Activated CD4-positive, alpha-beta memory T cell treated with anti-CD3 and anti-CD28 coated beads for 36 hours (primary cell): ENCODE measurements at regions of chr9 and their contacts with region 1.

Region 1: DNA sequence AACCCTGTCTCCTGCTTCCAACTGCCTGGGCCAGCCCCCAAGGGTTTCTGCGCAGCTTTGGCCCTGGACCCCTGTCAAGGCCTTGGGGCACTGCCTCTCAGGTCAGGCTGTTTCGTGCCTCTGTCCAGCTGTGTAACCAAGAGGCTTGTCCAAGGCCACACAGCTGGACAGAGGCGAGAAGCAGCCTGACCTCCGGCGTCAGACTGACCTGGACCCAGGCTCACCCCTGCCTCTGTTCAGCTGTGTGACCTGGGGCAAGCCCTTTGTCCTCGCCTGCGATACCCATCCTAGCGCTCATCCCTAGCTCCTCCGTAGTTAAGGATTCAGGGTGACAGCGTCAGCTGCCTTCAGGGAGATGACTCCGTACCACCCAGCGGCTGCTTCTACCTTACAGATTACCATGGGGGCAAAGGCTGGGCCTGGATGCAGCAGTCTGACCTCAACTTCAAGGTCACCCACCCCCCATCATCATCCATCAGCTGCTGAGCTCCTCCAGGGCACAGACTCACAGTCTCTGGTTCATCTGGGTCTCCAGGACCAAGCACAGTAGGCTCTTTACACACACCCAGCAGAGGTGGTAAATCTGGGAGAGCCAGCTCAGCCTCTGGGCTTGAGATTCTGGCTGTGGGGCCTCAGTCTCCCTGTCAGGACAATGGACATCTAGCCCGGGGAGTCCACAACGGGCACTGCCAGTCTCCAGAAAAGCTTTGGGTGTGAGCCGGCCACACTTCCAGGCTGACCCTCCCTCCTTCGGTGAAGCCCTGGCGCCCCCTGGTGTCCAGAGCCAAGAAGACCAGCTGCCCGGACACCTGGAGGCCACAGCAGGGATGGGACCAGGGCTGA is 7.9 kb downstream of the AK1 start:
- DNase-seq: peak; percentile 89
- H3K4me3 Mint-ChIP-seq: no peak overlapping the region
- H3K27ac Mint-ChIP-seq: no peak overlapping the region
- H3K4me1 Mint-ChIP-seq: peaks cover 13% of the 10 kb centered on the region
- H3K27me3 Mint-ChIP-seq: no peaks in the 10 kb centered on the region

Region 2: GRCh38 chr9:127586537-127586936 is 283.0 kb before region 1 on chr9:
- CTCF ChIA-PET with region 1: interaction called, 10 read pairs
- POLR2A ChIA-PET with region 1: no interaction called
- intact Hi-C with region 1: no loop called
- DNase-seq: peak; percentile 71
- H3K4me3 Mint-ChIP-seq: no peak overlapping the region
- H3K27ac Mint-ChIP-seq: no peak overlapping the region
- H3K4me1 Mint-ChIP-seq: peaks cover 9% of the 10 kb centered on the region
- H3K27me3 Mint-ChIP-seq: peaks cover 6% of the 10 kb centered on the region

Region 3: GRCh38 chr9:127770905-127771569 is 98.5 kb before region 1 on chr9:
- CTCF ChIA-PET with region 1: interaction called, 29 read pairs
- POLR2A ChIA-PET with region 1: no interaction called
- intact Hi-C with region 1: no loop called
- DNase-seq: peak; percentile 99
- H3K4me3 Mint-ChIP-seq: peak overlapping the region; percentile 89
- H3K27ac Mint-ChIP-seq: peak overlapping the region; percentile 85
- H3K4me1 Mint-ChIP-seq: peaks cover 56% of the 10 kb centered on the region
- H3K27me3 Mint-ChIP-seq: no peaks in the 10 kb centered on the region

Region 4: GRCh38 chr9:127802576-127803443 is 66.7 kb before region 1 on chr9 and contains the start of gene FPGS:
- CTCF ChIA-PET with region 1: interaction called, 27 read pairs
- POLR2A ChIA-PET with region 1: no interaction called
- intact Hi-C with region 1: no loop called
- DNase-seq: peak; percentile 91
- H3K4me3 Mint-ChIP-seq: peak within 1 kb of the TSS; percentile 88
- H3K27ac Mint-ChIP-seq: peak within 1 kb of the TSS; percentile 88
- H3K4me1 Mint-ChIP-seq: peaks cover 24% of the 10 kb centered on the region
- H3K27me3 Mint-ChIP-seq: no peaks in the 10 kb centered on the region
- total RNA-seq, gene FPGS: 80.0 to 83.9 TPM

Region 5: GRCh38 chr9:127910613-127911205 is 41.2 kb after region 1 on chr9:
- CTCF ChIA-PET with region 1: interaction called, 13 read pairs
- POLR2A ChIA-PET with region 1: no interaction called
- intact Hi-C with region 1: loop called (anchors 5 kb)
- DNase-seq: no peak
- H3K4me3 Mint-ChIP-seq: no peak overlapping the region
- H3K27ac Mint-ChIP-seq: peak overlapping the region; percentile 95
- H3K4me1 Mint-ChIP-seq: peaks cover 39% of the 10 kb centered on the region
- H3K27me3 Mint-ChIP-seq: no peaks in the 10 kb centered on the region

Region 6: DNA sequence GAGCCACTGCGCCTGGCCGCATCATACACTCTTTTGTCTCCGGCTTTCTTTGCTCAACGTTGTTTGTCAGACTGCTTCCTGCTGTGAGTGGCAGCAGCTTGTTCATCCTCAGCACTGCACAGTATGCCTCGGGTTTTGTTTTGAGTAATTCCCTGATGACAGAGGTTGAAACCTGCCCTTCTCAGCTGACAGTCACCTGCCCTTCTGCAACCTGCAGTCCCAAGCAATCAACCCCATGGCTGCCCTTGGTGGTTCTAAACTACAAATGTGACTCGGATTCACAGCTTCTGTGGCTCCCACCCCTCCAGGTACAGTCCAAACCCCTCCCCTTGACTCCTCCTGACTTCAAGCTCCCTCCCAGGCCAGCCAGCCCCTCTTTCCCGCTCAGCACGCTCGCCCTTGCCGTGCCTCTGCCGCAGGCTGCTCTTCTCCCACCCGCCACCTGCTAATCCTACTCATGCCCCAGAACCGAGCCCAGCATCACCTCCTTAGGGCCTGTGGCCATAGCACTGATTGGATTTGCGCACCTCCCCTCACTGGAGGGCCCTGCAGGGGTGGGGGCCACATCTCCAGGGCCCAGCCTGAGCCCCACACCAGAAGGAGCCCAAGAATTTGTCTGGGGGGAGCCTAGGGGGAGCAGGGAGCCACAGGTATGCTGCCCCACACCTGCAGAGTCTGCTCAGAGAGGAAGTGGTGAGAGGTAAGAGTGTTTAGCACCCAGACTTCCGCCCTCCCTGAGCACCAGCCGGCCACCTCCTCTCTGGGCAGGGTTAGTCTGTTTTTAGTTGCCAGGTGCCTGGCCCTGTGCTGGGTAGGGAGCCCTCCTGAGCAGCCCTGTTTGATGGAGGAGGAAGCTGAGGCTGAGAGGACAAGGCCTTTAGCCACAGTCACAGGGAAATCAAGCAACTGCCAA is 101.1 kb after region 1 on chr9:
- CTCF ChIA-PET with region 1: no interaction called
- POLR2A ChIA-PET with region 1: no interaction called
- intact Hi-C with region 1: no loop called
- DNase-seq: peak; percentile 89
- H3K4me3 Mint-ChIP-seq: peak overlapping the region; percentile 62
- H3K27ac Mint-ChIP-seq: peak overlapping the region; percentile 88
- H3K4me1 Mint-ChIP-seq: peaks cover 97% of the 10 kb centered on the region
- H3K27me3 Mint-ChIP-seq: no peaks in the 10 kb centered on the region

Region 7: GRCh38 chr9:127980706-127981558 is 111.4 kb after region 1 on chr9 and contains the start of gene EEIG1:
- CTCF ChIA-PET with region 1: no interaction called
- POLR2A ChIA-PET with region 1: no interaction called
- intact Hi-C with region 1: no loop called
- DNase-seq: peak; percentile 98
- H3K4me3 Mint-ChIP-seq: peak within 1 kb of the TSS; percentile 96
- H3K27ac Mint-ChIP-seq: peak within 1 kb of the TSS; percentile 93
- H3K4me1 Mint-ChIP-seq: peaks cover 43% of the 10 kb centered on the region
- H3K27me3 Mint-ChIP-seq: no peaks in the 10 kb centered on the region
- total RNA-seq, gene EEIG1: 50.7 to 58.0 TPM